Panc1 (cell line): ENCODE measurements at regions of chr2 and their contacts with region 1.

Region 1: GRCh38 chr2:238974501-238975166 is 126.7 kb downstream of the TWIST2 start:
- DNase-seq: peak; percentile 76
- ATAC-seq: peak; percentile 86
- H3K4me3 ChIP-seq: no peak overlapping the region
- H3K27ac ChIP-seq: peak overlapping the region; percentile 72
- H3K4me1 ChIP-seq: peaks cover 23% of the 10 kb centered on the region
- H3K27me3 ChIP-seq: no peaks in the 10 kb centered on the region
- CTCF ChIP-seq: peak; percentile 48

Region 2: DNA sequence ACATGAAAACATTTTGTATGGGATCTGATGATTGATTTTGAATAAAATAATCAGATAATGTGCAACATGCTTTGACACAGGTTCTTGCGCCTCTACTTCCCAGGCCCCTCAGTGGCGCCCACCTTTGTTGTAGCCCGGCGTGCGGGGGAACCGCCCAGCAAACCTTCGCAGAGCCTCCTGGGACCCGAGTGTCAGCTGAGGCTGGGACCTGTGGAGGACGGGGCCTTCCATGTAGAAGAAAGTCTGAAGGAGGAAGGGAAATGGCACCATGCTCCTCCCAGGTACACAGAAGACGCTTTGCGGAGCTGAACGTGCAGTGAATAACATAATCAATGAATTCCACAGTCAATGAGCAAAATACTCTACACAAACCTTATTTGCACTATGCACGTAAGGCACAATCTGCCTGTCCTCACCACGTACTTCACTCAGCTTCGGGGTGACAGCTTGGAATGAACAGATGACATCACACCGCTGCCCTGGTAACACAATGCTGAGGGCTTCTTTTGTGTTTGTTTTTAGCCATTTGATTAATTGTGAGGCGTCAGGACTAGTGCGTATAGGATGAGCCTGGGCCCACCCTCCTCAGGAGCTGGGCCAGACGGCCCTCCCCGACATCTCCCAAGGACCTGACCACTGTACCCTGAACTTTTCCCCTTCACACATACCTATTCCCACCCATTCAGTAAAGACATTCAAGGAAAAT is 48.7 kb before region 1 on chr2:
- CTCF ChIA-PET with region 1: no interaction called
- POLR2A ChIA-PET with region 1: interaction called, 11 read pairs
- in situ Hi-C with region 1: no loop called
- intact Hi-C with region 1: no loop called
- DNase-seq: no peak
- ATAC-seq: no peak
- H3K4me3 ChIP-seq: no peak overlapping the region
- H3K27ac ChIP-seq: no peak overlapping the region
- H3K4me1 ChIP-seq: no peaks in the 10 kb centered on the region; the same call in 1 of the 2 replicates
- H3K27me3 ChIP-seq: no peaks in the 10 kb centered on the region
- CTCF ChIP-seq: no peak

Region 3: DNA sequence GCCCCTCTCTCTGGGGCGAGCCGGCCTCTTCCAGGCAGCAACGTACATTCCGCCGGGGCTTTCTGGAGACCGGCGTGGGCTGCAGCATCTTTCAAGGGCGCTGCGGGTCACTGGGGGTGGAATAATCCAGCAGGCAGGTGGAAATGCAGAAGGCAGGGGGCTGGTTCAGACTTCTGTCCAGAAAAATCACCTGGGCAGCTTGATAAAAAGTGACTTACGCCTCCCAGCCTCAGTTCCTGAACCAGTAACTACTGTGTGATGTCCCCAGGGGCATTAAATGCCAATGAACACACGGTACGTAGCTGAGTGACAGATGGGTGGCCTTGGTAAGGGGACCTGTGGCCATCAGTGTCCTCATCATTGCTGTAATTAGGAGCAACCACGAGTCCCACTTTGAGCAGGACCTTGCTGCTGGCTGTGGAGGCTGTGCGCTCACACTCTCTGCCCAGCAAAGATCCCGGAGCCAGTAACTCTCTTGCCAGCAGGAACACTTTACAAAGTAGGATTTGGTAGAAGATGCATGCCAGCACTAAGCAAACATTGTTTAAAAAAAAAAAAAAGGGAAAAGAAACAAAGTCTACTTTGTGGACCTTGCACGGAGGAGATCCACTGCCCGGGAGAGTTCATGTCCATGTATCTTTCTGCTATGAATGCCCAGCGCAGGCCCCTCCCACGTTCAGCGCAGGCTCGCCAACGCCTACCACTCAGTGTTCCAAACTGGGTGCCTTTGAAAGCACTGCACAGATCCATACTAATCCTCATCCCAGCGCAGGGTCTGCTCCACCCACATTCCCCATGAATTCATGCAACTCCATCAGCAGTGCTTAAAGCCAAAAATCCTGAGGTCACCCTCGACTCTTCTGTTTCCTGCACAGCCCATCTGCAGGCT is 248.9 kb after region 1 on chr2:
- CTCF ChIA-PET with region 1: no interaction called
- POLR2A ChIA-PET with region 1: no interaction called
- in situ Hi-C with region 1: no loop called
- intact Hi-C with region 1: no loop called
- DNase-seq: no peak
- ATAC-seq: no peak
- H3K4me3 ChIP-seq: no peak overlapping the region
- H3K27ac ChIP-seq: no peak overlapping the region
- H3K4me1 ChIP-seq: no peaks in the 10 kb centered on the region; the same call in 1 of the 2 replicates
- H3K27me3 ChIP-seq: no peaks in the 10 kb centered on the region
- CTCF ChIP-seq: no peak